ENCODE measurements at regions of chr20 and their contacts with region 1.

Region 1: DNA sequence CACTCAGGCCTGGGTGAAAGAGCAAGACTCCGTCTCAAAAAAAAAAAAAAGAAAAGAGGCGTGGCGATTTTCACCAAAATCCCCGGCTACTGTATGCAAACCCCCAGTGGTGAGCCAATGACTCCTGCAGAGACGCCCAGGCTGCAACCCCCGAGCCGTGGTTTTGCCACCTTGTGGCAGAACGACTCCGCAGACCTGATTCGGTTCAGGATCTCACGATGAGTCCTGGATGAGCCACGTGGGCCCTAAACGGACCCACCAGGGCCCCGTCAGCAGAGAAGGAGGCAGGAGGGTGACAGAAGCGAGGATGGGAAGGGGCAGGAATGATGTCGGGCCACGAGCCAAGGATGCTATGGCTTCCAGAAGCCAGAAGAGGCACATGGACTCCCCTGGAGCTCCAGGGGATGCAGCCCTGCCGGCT is 42.5 kb downstream of the SLC2A4RG start:
- DNase-seq: no peak
- H3K4me3 ChIP-seq: no peak overlapping the region
- H3K27ac ChIP-seq: no peak overlapping the region
- H3K4me1 ChIP-seq: no peaks in the 10 kb centered on the region
- H3K27me3 ChIP-seq: no peaks in the 10 kb centered on the region
- CTCF ChIP-seq: peak; percentile 5 to 14 (median 5); a peak in 3 of 4 replicates
- EP300 ChIP-seq: no peak
- POLR2A ChIP-seq: no peak
- RAD21 ChIP-seq: no peak

Region 2: DNA sequence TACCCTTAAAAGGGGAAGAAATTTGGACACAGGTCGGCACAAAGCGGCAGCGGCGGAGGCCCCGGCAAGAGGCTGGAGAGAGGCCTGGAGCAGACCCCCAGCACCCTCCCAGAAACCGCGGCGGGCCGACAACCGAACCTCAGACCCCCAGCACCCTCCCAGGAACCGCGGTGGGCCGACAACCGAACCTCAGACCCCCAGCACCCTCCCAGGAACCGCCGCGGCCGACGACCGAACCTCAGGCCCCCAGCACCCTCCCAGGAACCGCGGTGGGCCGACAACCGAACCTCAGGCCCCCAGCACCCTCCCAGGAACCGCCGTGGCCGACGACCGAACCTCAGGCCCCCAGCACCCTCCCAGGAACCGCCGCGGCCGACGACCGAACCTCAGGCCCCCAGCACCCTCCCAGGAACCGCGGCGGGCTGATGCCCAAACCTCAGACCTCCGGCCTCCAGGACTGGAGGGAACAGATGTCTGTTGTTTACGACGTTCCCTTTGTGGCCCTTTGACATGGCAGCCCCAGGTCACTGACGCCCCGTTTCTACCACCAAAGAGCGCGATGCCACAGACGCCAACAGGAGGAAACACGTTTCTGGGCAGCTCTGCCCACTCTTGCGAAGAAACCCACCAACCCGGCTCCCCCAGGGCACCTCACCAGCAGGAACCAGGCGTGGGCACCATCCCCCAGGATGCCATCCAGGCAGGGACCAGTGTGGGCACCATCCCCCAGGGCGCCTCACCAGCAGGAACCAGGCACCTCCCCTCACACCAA is 20.6 kb after region 1 on chr20:
- CTCF ChIA-PET with region 1: interaction called, 34 read pairs
- POLR2A ChIA-PET with region 1: no interaction called
- DNase-seq: no peak
- H3K4me3 ChIP-seq: no peak overlapping the region
- H3K27ac ChIP-seq: no peak overlapping the region
- H3K4me1 ChIP-seq: no peaks in the 10 kb centered on the region
- H3K27me3 ChIP-seq: no peaks in the 10 kb centered on the region
- CTCF ChIP-seq: no peak
- EP300 ChIP-seq: no peak
- POLR2A ChIP-seq: no peak
- RAD21 ChIP-seq: no peak

Region 3: GRCh38 chr20:63810730-63811494 is 28.9 kb after region 1 on chr20:
- CTCF ChIA-PET with region 1: interaction called, 20 read pairs
- POLR2A ChIA-PET with region 1: interaction called, 3 read pairs
- DNase-seq: no peak
- H3K4me3 ChIP-seq: no peak overlapping the region
- H3K27ac ChIP-seq: no peak overlapping the region
- H3K4me1 ChIP-seq: peaks cover 0 to 4% (median 1%) of the 10 kb centered on the region in 4 experiments; a peak in 4 of 7 replicates
- H3K27me3 ChIP-seq: no peaks in the 10 kb centered on the region
- CTCF ChIP-seq: no peak
- EP300 ChIP-seq: no peak
- POLR2A ChIP-seq: no peak
- RAD21 ChIP-seq: no peak

Region 4: DNA sequence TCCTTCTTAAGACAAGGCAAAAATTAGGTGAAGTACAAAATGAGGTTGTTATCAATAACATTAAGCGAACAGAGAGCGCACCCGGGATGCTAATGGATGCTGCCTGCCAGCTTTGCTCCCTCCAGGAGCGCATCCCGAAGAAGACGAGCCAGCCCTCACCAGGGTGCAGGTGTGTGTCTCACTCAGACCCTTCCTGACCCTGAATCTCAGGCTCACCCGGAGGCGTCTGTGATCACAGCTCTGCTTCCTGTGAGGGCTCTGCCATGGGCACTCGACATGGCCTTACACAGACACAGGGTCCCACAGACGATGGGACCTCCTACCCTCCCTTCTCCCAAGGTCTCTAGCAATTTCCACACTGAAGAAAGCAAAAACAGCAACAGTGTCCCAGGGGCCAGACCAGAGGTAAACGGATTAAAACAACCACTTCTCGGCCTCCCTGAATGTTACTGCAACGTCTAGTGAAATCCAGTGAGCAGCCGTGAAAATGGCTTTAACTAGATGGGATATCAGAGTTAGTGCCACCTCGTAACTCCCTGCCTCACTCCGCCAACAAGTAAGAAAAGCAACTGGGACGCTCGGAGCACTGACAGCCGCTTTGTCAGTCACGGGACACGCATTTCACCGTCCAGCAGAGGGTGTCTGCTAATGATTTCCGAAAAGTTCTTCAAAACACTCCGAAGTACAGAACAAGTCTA is 37.3 kb after region 1 on chr20:
- CTCF ChIA-PET with region 1: interaction called, 20 read pairs
- POLR2A ChIA-PET with region 1: interaction called, 3 read pairs
- DNase-seq: no peak
- H3K4me3 ChIP-seq: no peak overlapping the region
- H3K27ac ChIP-seq: no peak overlapping the region
- H3K4me1 ChIP-seq: peaks cover 0 to 1% (median 0%) of the 10 kb centered on the region in 4 experiments; a peak in 1 of 7 replicates
- H3K27me3 ChIP-seq: no peaks in the 10 kb centered on the region
- CTCF ChIP-seq: peak; percentile 19 to 35 (median 33); a peak in 3 of 4 replicates
- EP300 ChIP-seq: no peak
- POLR2A ChIP-seq: no peak
- RAD21 ChIP-seq: peak; percentile 18 to 39; a peak in 2 of 4 replicates

Region 5: GRCh38 chr20:63846128-63846798 is 64.2 kb after region 1 on chr20:
- CTCF ChIA-PET with region 1: interaction called, 13 read pairs
- POLR2A ChIA-PET with region 1: interaction called, 3 read pairs
- DNase-seq: peak in 1 of 2 experiments; percentile 80
- H3K4me3 ChIP-seq: peak overlapping the region; percentile 25 to 60 (median 37)
- H3K27ac ChIP-seq: peak overlapping the region; percentile 49; the same call in 1 of the 2 replicates
- H3K4me1 ChIP-seq: peaks cover 6 to 29% (median 23%) of the 10 kb centered on the region in 4 experiments
- H3K27me3 ChIP-seq: no peaks in the 10 kb centered on the region
- CTCF ChIP-seq: no peak
- EP300 ChIP-seq: no peak
- POLR2A ChIP-seq: peak in 1 of 2 experiments; percentile 63; a peak in 1 of 3 replicates
- RAD21 ChIP-seq: no peak; a peak in 1 of 4 replicates

Region 6: DNA sequence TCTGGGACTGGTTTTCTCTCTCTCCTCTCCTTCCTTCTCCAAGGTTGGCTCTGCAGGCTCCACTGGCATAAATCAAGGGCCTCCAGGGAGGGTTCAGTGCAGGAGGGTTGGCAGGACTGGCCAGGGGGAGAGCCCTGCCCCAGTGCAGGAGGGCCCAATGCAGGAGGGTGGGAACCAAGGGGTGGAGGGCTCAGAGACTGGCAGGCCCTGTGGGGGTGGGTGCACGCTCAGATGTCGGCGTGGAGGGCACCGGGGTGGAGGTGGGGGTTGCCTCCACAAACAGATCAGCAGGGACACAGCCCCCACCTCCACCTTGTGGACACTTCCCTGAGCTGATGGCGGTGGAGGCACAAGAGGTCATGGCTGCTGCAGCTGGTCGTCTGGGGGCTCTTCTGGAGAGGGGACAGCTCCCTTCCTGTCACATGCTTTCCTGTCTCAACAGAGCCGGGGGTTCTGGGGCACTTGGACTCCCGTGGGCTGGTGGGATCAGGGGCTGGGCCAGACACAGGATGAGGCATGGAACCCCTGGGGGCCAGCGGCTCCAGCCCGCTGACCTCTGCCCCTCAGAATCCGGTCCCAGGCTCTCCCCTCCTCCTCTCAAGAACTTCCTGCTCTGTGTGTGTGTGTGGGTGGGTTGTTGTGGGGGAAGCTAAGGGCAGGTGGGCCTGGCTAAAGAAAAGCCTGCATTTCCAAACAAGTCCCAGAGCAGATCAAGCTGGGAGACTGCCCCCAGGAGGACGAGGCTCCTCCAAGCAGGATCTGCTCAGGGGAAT is 76.5 kb after region 1 on chr20:
- CTCF ChIA-PET with region 1: interaction called, 19 read pairs
- POLR2A ChIA-PET with region 1: interaction called, 6 read pairs
- DNase-seq: peak in 1 of 2 experiments; percentile 67
- H3K4me3 ChIP-seq: peak overlapping the region in 2 of 4 experiments; percentile 14 to 29; a peak in 3 of 8 replicates
- H3K27ac ChIP-seq: no peak overlapping the region; the same call in 1 of the 2 replicates
- H3K4me1 ChIP-seq: peaks cover 7 to 49% (median 43%) of the 10 kb centered on the region in 4 experiments
- H3K27me3 ChIP-seq: no peaks in the 10 kb centered on the region
- CTCF ChIP-seq: peak; percentile 36 to 58 (median 54)
- EP300 ChIP-seq: peak in 1 of 2 experiments; percentile 21; a peak in 1 of 3 replicates
- POLR2A ChIP-seq: no peak
- RAD21 ChIP-seq: peak; percentile 51 to 61; a peak in 3 of 4 replicates